ENCODE measurements at regions of chr22 and their contacts with region 1.

Region 1: GRCh38 chr22:29394931-29395581 is 6.7 kb upstream of the AP1B1 start:
- DNase-seq: peak; percentile 46 to 95 (median 74)

Region 2: DNA sequence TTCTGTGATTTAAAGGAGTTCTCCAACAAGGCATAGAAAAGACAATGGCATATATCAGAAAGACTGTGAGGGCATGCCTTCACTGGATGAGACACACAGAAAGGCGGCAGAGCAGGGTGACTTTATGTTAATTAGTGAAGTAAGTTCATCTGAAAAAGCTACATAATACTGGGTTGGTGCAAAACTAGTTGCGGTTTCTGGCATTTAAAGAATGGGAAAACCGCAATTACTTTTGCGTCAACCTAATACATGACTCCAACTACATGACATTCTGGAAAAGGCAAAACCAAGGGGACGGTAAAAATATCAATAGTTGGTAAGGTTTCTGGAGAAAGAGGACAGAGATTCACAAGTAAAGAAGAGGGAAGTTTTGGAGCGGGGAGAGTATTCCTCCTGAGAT is 48.4 kb after region 1 on chr22:
- intact Hi-C with region 1: no loop called
- DNase-seq: no peak

Region 3: GRCh38 chr22:29524440-29525191 is 129.6 kb after region 1 on chr22:
- intact Hi-C with region 1: loop called (anchors 10 kb)
- DNase-seq: peak in 1 of 10 donors; percentile 24

Measured in posterior cingulate gyrus (tissue), 11 donors.